ENCODE measurements at regions of chr5 and their contacts with region 1.

Region 1: DNA sequence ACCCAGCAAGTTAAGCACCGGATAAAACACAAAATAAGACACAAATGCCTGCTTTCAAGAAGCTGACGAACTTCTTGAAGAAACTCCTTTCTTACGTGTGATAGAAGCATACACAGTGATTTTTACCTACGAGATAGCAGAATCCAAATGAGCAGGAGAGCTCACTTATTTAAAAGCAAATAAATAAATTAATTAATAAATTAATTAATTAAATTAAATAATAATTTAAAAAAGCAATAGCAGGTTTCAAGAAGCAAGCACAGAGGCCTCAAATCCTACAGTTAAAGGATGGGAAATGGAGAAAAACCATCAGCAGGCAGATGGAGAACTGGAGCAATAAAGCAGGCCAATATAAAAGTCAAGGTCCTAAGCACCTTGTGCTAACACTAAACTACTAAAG is 17.3 kb downstream of the LEAP2 start:
- DNase-seq: no peak
- CTCF ChIP-seq: no peak

Region 2: DNA sequence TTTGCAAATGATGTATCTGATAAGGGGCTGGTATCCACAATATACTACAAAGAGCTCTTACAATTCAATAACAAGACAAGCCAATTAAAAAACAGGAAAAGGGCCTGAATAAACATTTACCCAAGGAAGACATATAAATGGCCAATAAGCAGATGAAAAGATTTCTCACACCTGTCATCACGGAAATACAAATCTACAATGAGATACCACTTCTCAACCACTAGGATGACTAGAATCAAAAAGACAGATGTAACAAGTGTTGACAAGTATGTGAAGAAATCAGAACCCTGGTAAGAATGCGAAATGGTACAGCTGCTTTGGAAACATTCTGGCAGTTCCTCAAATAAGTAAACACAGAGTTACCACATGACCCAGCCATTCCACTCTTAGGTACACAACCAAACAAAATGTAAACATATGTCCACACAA is 15.1 kb after region 1 on chr5:
- CTCF ChIA-PET with region 1: interaction called, 13 read pairs
- POLR2A ChIA-PET with region 1: no interaction called
- DNase-seq: no peak
- CTCF ChIP-seq: no peak